HEK293T (cell line): ENCODE measurements at regions of chr13 and their contacts with region 1.

Region 1: GRCh38 chr13:91185294-91185863 is 162.1 kb upstream of the MIR17HG start:
- DNase-seq: peak; percentile 54

Region 2: GRCh38 chr13:90974249-90974975 is 211.0 kb before region 1 on chr13:
- CTCF ChIA-PET with region 1: interaction called, 10 read pairs
- POLR2A ChIA-PET with region 1: no interaction called
- DNase-seq: no peak

Region 3: GRCh38 chr13:91078093-91078679 is 107.2 kb before region 1 on chr13:
- CTCF ChIA-PET with region 1: interaction called, 23 read pairs
- POLR2A ChIA-PET with region 1: no interaction called
- DNase-seq: peak; percentile 37

Region 4: DNA sequence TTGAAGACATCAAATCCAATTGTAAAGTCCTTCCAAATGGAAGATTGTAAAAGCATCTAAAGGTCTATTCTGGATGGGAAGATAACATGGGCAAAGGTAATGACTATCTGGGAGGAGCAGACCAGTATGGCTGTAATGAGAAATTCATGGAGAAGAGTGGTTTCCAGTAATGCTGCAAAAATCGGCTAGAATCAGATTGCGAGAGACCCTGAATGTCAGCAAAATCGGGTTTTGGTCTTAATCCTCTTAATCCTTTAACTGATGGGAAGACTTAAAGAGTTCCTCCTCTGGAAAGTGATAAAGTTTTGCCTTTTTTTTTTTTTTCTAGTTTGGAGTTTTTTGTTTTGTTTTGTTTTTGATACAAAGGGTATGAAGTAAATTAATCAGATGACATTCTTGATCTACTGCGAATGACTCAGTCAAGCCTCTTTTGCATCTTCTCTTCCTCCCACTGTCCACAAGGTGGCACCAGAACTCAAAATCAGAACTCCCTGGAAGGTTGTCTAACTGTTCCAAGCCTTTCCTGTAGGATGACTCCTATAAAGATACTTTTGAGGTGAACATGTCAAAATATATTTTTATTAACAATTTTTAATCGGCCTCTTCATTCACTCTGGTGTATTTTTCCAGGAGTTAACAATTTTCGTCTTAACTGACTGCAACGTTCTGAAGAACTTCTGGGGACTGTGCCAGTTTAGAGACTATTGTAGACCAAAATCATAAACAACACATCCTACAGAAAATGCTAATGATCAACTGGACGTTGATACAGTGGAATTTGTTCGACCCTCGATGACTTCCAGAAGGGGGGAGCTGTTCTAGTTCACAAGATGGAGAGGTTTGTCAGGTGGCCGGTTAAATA is 51.2 kb before region 1 on chr13:
- CTCF ChIA-PET with region 1: interaction called, 16 read pairs
- POLR2A ChIA-PET with region 1: no interaction called
- DNase-seq: peak; percentile 84

Region 5: GRCh38 chr13:91162180-91162579 is 23.2 kb before region 1 on chr13:
- CTCF ChIA-PET with region 1: interaction called, 13 read pairs
- POLR2A ChIA-PET with region 1: interaction called, 3 read pairs
- DNase-seq: no peak